ENCODE measurements at regions of chr1 and their contacts with region 1.

Region 1: DNA sequence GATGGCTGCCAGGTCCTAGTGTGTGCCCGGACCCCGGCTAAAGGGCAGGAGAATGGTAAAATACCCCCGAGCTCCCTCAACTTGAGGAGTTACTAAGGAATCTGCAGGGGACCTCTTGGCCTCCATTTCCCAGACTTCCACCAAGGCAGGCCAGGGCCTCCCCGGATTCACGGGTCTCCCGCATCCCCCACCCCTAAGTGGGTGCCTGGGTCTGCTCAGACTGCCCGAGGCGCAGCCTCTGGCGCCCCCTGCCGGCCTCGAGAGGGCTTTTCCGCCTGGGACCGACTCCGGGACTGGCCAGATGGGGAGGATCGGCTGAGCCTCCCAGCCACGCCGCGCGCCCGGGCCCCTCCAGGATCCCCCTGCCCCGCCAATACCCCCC is 1.7 kb downstream of the PLEKHG5 start:
- DNase-seq: peak; percentile 77
- ATAC-seq: peak; percentile 71 to 77

Region 2: GRCh38 chr1:6367381-6368012 is 122.3 kb before region 1 on chr1:
- intact Hi-C with region 1: no loop called
- DNase-seq: no peak
- ATAC-seq: peak; percentile 72 to 87

Region 3: GRCh38 chr1:6634371-6635052 is 144.7 kb after region 1 on chr1:
- intact Hi-C with region 1: no loop called
- DNase-seq: peak; percentile 73
- ATAC-seq: peak; percentile 53 to 69

Region 4: DNA sequence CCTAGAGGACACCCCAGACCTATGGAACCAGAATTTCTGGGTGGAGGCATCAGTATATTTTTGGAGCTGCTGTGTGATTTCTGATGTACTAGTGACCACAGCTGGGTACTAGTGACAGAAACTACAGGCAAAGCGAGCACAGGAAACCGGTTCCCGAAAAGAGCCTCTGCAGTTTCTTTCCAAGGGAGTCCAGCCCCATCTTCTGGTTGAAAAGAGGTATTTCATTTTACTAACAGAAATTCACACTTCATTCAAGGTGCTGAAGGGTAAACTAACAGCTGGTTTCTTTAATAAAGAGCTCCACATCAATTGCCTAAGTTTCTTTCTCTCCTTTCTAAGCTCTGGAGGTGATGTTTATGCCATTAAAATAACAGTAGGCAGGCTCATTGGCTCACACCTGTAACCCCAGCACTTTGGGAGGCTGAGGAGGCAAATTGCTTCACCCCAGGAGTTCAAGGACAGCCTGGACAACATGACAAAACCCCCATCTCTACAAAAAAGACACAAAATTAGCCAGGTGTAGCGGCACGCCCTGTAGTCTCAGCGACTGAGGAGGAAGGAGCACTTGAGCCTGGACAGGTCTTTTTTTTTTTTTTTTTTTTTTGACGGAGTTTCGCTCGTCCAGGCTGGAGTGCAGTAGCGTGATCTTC is 156.8 kb after region 1 on chr1:
- intact Hi-C with region 1: loop called in 1 of 2 experiments (anchors 5 kb)
- DNase-seq: peak; percentile 17
- ATAC-seq: peak; percentile 39 to 51